Breast epithelium (tissue), 4 donors: ENCODE measurements at regions of chr16 and their contacts with region 1.

Region 1: GRCh38 chr16:79770244-79771064 is 169.9 kb upstream of the MAF start:
- DNase-seq: peak; percentile 88
- H3K4me3 ChIP-seq: peak overlapping the region; percentile 55 to 72 (median 63)
- H3K27ac ChIP-seq: peak overlapping the region; percentile 88 to 94
- H3K4me1 ChIP-seq: peaks cover 0 to 14% of the 10 kb centered on the region in 2 donors
- H3K27me3 ChIP-seq: no peaks in the 10 kb centered on the region
- CTCF ChIP-seq: no peak
- POLR2A ChIP-seq: no peak

Region 2: DNA sequence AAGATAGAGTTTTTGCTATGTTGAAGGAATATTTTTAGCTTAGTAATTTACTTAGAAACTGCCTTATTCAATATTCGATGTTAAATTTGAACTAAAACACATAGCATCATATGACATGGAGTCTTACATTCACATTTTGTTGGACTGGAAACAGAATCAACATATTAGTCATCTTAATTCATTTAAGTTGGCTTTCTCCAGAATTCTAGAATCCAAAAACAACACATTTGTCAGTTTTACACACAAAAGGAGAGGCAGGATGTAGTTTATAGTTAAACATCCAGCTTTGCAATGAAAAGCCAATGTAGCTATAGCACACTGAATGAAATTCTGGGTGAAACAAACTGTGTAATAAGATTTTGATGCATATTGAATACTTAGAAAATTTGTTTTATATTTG is 1627.7 kb before region 1 on chr16:
- intact Hi-C with region 1: no loop called
- DNase-seq: no peak
- H3K4me3 ChIP-seq: no peak overlapping the region
- H3K27ac ChIP-seq: no peak overlapping the region
- H3K4me1 ChIP-seq: no peaks in the 10 kb centered on the region
- H3K27me3 ChIP-seq: no peaks in the 10 kb centered on the region
- CTCF ChIP-seq: no peak
- POLR2A ChIP-seq: no peak

Region 3: GRCh38 chr16:81403616-81404373 is 1633.3 kb after region 1 on chr16:
- intact Hi-C with region 1: no loop called
- DNase-seq: peak; percentile 72 to 83
- H3K4me3 ChIP-seq: peak overlapping the region in 2 of 3 donors; percentile 22 to 59
- H3K27ac ChIP-seq: no peak overlapping the region
- H3K4me1 ChIP-seq: peaks cover 0 to 3% of the 10 kb centered on the region in 2 donors
- H3K27me3 ChIP-seq: no peaks in the 10 kb centered on the region
- CTCF ChIP-seq: peak; percentile 91 to 97 (median 96)
- POLR2A ChIP-seq: no peak

Region 4: DNA sequence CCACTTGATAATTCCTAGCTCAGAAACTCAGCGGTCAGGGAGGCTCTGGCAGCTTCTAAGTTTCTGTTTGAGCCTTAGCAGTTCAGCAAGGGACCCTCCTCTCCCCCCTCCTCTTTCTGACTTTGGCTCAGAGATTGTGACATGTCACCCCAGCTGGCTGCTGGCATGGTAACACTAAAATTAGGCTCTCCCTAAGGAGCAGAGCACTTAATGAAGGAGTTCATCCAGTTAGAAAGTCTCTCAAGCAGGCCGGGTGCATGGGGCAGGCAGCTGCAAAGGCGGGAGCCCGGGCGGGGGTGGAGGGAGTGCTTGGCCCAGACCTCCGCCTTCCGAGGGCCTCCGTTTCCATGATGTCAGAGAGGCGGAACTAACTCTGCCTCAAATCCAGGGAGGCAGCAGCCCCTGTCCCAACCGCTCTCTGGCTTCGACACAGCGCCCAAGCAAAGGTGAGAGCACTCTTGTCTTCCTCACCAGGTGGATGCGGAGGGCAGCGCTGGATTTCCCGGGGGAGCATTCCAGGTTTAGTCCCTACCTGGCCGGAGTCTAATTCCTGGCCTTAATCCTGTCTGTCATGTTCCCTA is 1880.6 kb after region 1 on chr16:
- intact Hi-C with region 1: loop called (anchors 10 kb)
- DNase-seq: no peak
- H3K4me3 ChIP-seq: peak overlapping the region in 1 of 3 donors; percentile 12
- H3K27ac ChIP-seq: peak overlapping the region in 1 of 2 donors; percentile 61
- H3K4me1 ChIP-seq: no peaks in the 10 kb centered on the region
- H3K27me3 ChIP-seq: no peaks in the 10 kb centered on the region
- CTCF ChIP-seq: no peak
- POLR2A ChIP-seq: no peak